Endothelial cell of umbilical vein (primary cell): ENCODE measurements at regions of chr4 and their contacts with region 1.

Region 1: DNA sequence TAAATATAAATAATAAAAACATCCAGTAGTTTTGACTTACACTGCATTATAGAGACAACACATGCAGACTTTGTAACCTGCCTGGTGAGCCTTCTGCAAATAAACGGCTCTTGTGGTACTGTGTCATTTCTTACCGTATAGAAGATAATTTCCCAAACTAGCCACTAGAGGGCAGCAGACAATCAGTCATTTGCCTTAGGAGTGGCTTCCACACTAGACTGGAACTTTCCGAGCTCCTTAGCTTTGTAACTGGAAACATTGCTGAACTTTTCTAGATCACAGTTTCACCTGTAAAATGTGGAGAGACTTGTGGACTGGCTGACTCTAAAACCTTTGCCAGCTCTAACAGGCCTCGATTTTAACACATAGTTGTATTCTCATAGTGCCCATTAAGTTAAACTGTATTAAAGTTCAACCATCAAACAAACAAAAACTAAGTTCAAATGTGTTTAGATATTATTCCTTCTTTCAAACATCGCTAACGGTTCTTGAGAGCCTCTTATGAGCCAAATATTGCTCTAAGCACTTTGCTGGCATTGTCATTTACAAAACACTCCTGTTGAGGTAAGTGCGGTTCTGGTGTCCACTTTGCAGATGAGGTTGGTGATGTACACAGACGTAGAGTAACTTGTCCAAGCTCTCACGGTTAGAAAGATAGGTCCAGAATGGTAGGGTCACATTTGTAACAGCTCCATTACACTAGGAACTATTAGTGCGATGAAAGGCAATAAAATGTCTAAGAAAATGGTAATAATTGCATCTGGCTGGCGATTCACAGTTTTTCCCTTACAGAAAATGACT is 345.5 kb downstream of the ANK2 start:
- DNase-seq: peak; percentile 92
- H3K4me3 ChIP-seq: no peak overlapping the region
- H3K27ac ChIP-seq: no peak overlapping the region
- H3K4me1 ChIP-seq: peaks cover 6% of the 10 kb centered on the region
- H3K27me3 ChIP-seq: no peaks in the 10 kb centered on the region
- CTCF ChIP-seq: peak; percentile 43 to 50
- POLR2A ChIP-seq: no peak

Region 2: DNA sequence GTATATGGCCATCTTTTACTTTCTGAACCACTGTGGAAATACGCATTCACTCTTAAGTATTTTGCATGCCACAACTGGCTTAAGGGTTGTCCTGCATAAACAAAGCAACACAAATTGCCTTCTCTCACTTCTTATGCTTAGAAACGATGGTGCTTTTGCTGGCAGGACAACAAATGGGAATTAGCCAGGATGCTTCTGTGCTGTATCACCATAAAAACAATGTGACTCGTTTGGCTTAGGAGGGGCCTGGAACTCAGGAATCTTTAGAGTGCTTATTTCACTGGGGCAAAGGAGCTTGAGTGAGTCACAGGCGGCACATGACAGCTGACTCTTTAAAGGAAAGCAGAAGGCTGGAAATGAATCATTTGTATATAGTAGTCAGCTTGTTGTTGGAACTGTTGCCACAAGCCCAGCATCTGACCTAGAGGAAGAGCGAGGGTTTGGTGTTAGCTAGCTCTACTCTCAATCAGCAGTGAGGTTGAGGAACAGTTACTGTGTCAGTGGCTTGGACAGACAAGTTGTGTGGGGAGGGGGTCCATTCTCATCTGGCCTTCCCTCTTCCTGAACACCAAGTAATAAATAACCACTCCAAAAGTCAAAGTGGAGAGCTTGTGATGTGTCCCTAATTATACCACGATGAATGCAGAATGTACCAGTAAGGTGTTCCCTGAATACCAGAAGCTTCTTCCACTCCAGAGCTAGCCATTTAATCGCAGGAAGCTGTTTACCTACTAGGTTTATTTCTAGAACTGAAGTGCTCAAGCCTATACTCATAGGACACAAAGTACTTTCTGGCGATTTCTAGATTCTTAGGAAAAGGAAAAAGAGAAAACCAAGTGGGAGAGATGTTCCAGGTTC is 73.5 kb after region 1 on chr4:
- CTCF ChIA-PET with region 1: interaction called, 15 read pairs
- POLR2A ChIA-PET with region 1: no interaction called
- dilution Hi-C with region 1: no loop called
- intact Hi-C with region 1: loop called (anchors 1 kb)
- DNase-seq: peak; percentile 100
- H3K4me3 ChIP-seq: peak overlapping the region in 1 of 3 experiments; percentile 7
- H3K27ac ChIP-seq: peak overlapping the region; percentile 96
- H3K4me1 ChIP-seq: peaks cover 31% of the 10 kb centered on the region
- H3K27me3 ChIP-seq: no peaks in the 10 kb centered on the region
- CTCF ChIP-seq: no peak
- POLR2A ChIP-seq: peak; percentile 40

Region 3: DNA sequence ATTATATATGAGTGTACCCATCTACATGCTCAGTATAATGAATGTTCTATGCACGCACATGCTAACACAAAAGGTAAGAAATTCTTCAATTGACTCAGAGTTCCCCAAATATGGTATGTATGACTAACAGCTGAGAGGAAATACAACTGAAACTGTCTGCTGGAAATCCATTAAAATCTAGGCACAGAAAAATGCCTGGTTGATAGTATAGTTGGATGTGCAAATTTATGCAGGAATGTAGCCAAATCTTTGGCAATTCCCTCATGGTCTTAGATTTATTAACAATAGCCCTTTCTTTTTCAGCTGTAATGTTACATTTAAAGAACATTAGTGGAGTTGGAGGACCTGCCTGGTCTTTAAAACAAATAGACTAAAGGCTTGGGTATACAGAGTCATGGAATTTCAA is 361.1 kb after region 1 on chr4:
- CTCF ChIA-PET with region 1: interaction called, 24 read pairs
- POLR2A ChIA-PET with region 1: no interaction called
- dilution Hi-C with region 1: no loop called
- intact Hi-C with region 1: loop called (anchors 1 kb)
- DNase-seq: peak; percentile 73
- H3K4me3 ChIP-seq: no peak overlapping the region
- H3K27ac ChIP-seq: no peak overlapping the region
- H3K4me1 ChIP-seq: peaks cover 29% of the 10 kb centered on the region
- H3K27me3 ChIP-seq: no peaks in the 10 kb centered on the region
- CTCF ChIP-seq: no peak
- POLR2A ChIP-seq: no peak

Region 4: DNA sequence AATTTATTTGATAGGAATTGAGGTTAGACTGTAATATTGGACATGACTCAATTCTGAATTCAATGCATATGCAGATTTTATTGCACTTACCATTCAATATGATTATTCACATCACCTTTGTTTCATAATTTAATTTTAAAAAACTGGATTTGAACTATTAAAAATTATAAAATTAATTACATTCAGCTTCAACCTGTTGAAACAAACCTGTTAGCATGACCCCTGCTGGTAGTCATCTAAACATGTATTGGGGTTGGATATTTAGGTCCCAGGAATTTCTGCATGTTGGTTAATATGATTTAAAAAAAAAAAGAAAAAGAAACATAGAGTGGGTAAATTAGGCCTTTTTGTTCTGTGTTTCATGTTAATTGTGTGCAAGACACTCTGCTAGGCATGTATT is 498.6 kb after region 1 on chr4:
- CTCF ChIA-PET with region 1: interaction called, 19 read pairs
- POLR2A ChIA-PET with region 1: no interaction called
- dilution Hi-C with region 1: no loop called
- intact Hi-C with region 1: loop called (anchors 2 kb)
- DNase-seq: peak; percentile 26
- H3K4me3 ChIP-seq: no peak overlapping the region
- H3K27ac ChIP-seq: no peak overlapping the region
- H3K4me1 ChIP-seq: no peaks in the 10 kb centered on the region
- H3K27me3 ChIP-seq: no peaks in the 10 kb centered on the region
- CTCF ChIP-seq: no peak
- POLR2A ChIP-seq: no peak

Region 5: GRCh38 chr4:114378306-114378903 is 983.5 kb after region 1 on chr4:
- CTCF ChIA-PET with region 1: interaction called, 51 read pairs
- POLR2A ChIA-PET with region 1: no interaction called
- dilution Hi-C with region 1: no loop called
- intact Hi-C with region 1: no loop called
- DNase-seq: peak; percentile 37
- H3K4me3 ChIP-seq: no peak overlapping the region
- H3K27ac ChIP-seq: no peak overlapping the region
- H3K4me1 ChIP-seq: no peaks in the 10 kb centered on the region
- H3K27me3 ChIP-seq: peaks cover 0 to 2% of the 10 kb centered on the region in 2 experiments
- CTCF ChIP-seq: peak in 1 of 2 donors; percentile 21
- POLR2A ChIP-seq: no peak